Heart left ventricle (tissue), 16 donors: ENCODE measurements at regions of chr6 and their contacts with region 1.

Region 1: DNA sequence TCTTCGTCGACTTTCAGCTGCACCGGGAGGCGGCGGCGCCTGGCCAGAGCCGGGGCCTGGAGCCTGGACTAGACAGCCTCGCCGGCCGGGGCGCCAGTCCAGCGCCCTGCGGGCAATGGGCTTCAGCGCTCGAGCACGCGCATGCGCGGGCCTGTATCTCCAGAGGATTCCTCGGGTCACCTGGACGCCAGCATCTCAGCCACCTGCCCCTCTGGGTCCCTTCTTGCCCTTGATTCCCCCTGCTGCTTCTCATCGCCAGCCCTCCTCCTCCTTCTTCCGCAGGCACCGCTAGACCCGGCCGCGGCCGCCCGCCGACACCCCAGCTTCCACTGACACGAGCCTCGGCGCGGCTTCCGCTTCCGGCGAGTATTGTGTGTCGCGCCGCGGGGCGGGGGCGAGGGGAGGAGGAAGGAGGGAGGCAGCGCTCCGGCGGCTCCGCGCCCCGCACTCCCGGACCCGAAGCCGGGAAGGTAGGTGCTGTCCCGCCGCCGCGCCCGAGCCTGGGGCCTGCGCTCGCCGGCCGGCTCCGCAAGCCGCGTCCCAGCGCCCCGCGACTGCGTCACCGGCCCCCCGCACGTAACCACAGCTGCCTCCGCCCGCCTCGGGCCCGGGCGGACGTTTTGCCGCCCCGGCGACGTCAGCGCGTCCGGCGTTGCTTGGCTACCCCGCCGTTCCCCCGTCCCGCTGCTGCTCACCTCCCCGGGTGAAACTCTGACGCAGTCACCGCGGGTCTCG is at the start of gene TRIM39:
- DNase-seq: peak; percentile 86 to 94 (median 89)
- ATAC-seq: peak; percentile 62 to 92 (median 88)
- H3K4me3 ChIP-seq: peak within 1 kb of the TSS; percentile 74 to 97 (median 86)
- H3K27ac ChIP-seq: peak within 1 kb of the TSS; percentile 91 to 99 (median 97)
- H3K4me1 ChIP-seq: peaks cover 5 to 51% (median 23%) of the 10 kb centered on the region in 12 donors
- H3K27me3 ChIP-seq: no peaks in the 10 kb centered on the region
- CTCF ChIP-seq: peak in 2 of 12 donors; percentile 13 to 20
- POLR2A ChIP-seq: peak in 1 of 2 donors; percentile 77
- total RNA-seq, gene TRIM39: 6.4 to 12.1 (median 8.4) TPM

Region 2: GRCh38 chr6:30066577-30067459 is 259.9 kb before region 1 on chr6 and contains the start of gene PPP1R11:
- intact Hi-C with region 1: loop called in 1 of 10 experiments (anchors 10 kb)
- DNase-seq: peak; percentile 98 to 99 (median 99)
- ATAC-seq: peak; percentile 99
- H3K4me3 ChIP-seq: peak within 1 kb of the TSS; percentile 51 to 86 (median 74)
- H3K27ac ChIP-seq: peak within 1 kb of the TSS; percentile 80 to 95 (median 91)
- H3K4me1 ChIP-seq: peaks cover 0 to 46% (median 30%) of the 10 kb centered on the region in 12 donors
- H3K27me3 ChIP-seq: peaks cover 0 to 14% (median 8%) of the 10 kb centered on the region in 9 donors
- CTCF ChIP-seq: peak in 1 of 12 donors; percentile 6
- POLR2A ChIP-seq: peak in 1 of 2 donors; percentile 78
- total RNA-seq, gene PPP1R11: 41.6 to 64.7 (median 44.9) TPM

Region 3: DNA sequence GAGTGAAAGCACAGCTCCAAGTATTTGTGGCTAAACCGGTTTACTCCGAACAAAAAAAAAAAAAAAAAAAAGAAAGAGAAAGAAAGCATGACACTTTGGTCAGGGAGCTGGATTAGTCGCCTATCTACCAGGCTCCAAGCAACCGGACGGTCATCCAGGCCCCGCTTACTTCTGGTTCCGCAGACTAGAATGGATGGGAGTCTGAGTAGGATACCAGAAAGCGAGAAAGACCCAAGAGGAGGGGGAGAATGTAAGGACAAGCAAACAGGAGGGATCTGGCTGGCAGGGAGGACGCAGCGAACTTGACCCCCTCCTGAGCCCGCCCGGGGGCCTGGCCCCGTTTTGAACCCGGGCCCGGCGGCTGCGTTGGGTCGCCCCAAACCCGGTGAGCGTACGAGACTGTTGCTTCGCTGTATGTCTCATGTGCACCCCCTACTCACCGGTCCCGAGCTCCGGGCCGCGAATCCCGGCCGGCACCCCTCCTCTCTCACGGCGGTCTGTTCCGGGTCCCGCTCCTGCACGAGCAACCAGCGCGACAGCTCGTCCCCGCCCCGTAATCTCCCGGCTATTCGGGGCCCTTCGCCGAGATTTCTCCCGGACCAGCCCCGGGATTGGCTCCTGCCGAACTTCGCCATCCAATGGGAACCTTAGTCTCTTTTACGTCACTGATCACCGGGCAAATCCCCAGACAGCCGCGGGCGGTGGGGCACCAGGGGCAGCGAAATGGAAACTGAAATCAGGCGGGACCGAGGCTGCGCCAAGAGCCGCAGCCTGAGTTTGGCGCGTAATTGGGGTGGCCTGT is 113.6 kb before region 1 on chr6 and contains the start of gene TRIM26:
- intact Hi-C with region 1: loop called in 6 of 10 experiments (anchors 1 to 10 kb)
- DNase-seq: peak; percentile 98
- ATAC-seq: peak; percentile 96 to 99 (median 97)
- H3K4me3 ChIP-seq: peak within 1 kb of the TSS; percentile 55 to 98 (median 83)
- H3K27ac ChIP-seq: peak within 1 kb of the TSS; percentile 85 to 99 (median 97)
- H3K4me1 ChIP-seq: peaks cover 2 to 46% (median 30%) of the 10 kb centered on the region in 12 donors
- H3K27me3 ChIP-seq: no peaks in the 10 kb centered on the region
- CTCF ChIP-seq: no peak
- POLR2A ChIP-seq: peak; percentile 94 to 99
- total RNA-seq, gene TRIM26: 19.1 to 37.4 (median 24.5) TPM

Region 4: DNA sequence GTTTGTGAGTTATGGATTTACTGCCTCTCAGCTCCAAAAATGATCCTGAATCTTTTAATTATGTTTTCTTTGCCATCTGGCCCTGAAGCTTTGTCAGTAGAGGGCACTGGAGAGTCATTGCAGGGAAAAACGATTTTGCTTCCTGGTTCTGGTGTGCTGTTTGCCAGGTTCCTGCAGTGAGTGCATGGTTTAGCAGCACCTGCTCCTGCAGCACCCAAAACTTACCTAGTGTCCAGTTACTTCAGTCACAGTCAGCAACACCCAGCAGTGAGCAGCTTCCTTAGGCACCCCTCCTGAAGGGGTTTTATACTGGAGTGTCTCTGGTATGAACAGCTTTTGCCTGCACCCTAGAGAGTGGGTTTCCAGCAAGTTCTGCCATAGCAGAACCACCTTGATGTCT is 107.4 kb before region 1 on chr6:
- intact Hi-C with region 1: loop called in 6 of 10 experiments (anchors 1 to 10 kb)
- DNase-seq: peak in 1 of 5 donors; percentile 12
- ATAC-seq: peak in 3 of 4 donors; percentile 24 to 54 (median 40)
- H3K4me3 ChIP-seq: no peak overlapping the region
- H3K27ac ChIP-seq: no peak overlapping the region
- H3K4me1 ChIP-seq: peaks cover 0 to 9% (median 4%) of the 10 kb centered on the region in 12 donors
- H3K27me3 ChIP-seq: no peaks in the 10 kb centered on the region
- CTCF ChIP-seq: peak; percentile 62 to 84 (median 76)
- POLR2A ChIP-seq: no peak

Region 5: DNA sequence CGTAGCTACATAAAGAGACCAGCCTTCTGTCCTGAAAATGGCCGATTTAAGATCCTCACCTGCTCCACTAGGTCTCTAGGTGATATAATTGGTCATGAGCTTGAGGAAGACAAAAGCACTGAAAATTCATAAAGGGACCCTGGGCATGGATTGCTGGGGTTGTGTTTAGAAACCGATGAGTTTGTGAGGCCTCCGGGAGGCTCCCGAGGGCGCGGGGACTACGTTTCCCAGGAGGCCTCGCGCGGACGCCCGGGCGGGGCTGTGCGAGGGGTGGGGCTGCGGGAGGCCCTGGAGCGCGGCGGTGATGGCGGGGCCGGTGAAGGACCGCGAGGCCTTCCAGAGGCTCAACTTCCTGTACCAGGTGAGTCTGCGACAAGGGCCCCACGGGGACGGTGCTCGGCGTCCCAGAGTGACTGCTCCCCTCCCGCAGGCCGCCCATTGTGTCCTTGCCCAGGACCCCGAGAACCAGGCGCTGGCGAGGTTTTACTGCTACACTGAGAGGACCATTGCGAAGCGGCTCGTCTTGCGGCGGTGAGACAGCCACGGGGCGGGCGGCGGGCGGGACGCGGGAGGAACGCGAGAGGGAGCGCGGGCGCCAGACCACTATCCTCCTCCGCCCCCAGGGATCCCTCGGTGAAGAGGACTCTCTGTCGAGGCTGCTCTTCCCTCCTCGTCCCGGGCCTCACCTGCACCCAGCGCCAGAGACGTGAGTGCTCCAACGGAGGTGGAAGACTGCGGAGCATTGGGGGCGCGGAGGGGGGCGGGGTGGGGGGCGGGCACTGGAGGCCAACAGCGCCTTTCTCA is 18.4 kb after region 1 on chr6 and contains the start of gene RPP21:
- intact Hi-C with region 1: loop called in 1 of 10 experiments (anchors 2 kb)
- DNase-seq: peak; percentile 87 to 92 (median 90)
- ATAC-seq: peak; percentile 97 to 99 (median 99)
- H3K4me3 ChIP-seq: peak within 1 kb of the TSS; percentile 35 to 92 (median 80)
- H3K27ac ChIP-seq: peak within 1 kb of the TSS; percentile 53 to 91 (median 81)
- H3K4me1 ChIP-seq: peaks cover 0 to 16% (median 8%) of the 10 kb centered on the region in 12 donors
- H3K27me3 ChIP-seq: no peaks in the 10 kb centered on the region
- CTCF ChIP-seq: no peak
- POLR2A ChIP-seq: peak in 1 of 2 donors; percentile 82
- total RNA-seq, gene RPP21: 17.3 to 64.4 (median 24.7) TPM